Panc1 (cell line): ENCODE measurements at regions of chr3 and their contacts with region 1.

Region 1: DNA sequence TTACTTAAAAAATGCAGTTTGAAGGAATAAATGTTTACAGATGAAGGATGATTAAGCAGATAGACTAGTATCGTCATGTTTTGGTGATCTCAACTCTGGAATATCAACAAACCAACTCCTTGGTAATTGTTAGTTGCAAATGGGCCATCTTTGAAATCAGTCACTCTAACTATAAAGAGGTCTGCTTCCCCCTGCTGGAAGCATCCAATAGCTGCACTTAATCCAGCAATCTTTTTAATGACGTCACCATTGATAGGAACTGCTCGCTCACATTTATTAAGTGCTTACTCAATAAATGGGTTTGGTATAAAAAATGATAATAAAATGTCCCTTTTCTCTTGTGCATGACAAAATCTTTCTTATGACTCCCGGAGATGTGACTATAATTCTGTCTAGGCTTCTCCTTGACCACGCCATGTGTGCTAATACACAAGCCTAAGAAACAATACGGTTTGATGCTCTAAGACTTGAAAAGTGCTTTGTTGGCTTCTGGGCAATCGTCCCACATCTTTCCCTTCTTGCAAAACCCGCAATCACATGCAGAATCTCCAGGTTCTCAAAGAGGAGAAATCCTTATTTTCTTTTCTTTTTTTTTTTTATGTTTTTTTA is 227.6 kb upstream of the POU1F1 start:
- DNase-seq: peak; percentile 41
- ATAC-seq: no peak
- H3K4me3 ChIP-seq: no peak overlapping the region
- H3K27ac ChIP-seq: peak overlapping the region; percentile 34; the same call in 1 of the 2 replicates
- H3K4me1 ChIP-seq: no peaks in the 10 kb centered on the region
- H3K27me3 ChIP-seq: no peaks in the 10 kb centered on the region
- CTCF ChIP-seq: peak; percentile 56; the same call in 1 of the 2 replicates

Region 2: DNA sequence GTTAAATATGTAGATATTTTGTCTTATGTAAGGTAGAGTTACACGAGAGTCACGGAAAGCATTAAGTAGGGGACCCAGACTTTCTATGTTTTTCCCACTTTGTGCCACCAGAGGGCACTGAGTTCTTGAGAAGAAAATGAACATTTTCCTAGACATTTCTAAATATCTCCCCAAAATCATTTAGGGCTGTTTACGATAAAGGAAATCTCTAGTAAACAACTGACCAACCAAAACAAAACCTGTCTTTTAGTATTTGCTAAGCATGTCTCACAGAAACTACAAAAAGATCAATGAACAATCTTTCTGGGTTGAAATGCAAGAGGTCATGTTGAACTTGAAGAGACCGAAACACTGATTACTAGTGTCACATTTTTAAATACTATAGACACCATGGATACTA is 243.7 kb before region 1 on chr3:
- CTCF ChIA-PET with region 1: no interaction called
- POLR2A ChIA-PET with region 1: no interaction called
- in situ Hi-C with region 1: no loop called
- intact Hi-C with region 1: loop called (anchors 2 kb)
- DNase-seq: peak; percentile 27
- ATAC-seq: no peak
- H3K4me3 ChIP-seq: no peak overlapping the region
- H3K27ac ChIP-seq: no peak overlapping the region; the same call in 1 of the 2 replicates
- H3K4me1 ChIP-seq: no peaks in the 10 kb centered on the region
- H3K27me3 ChIP-seq: no peaks in the 10 kb centered on the region
- CTCF ChIP-seq: peak; percentile 66; the same call in 1 of the 2 replicates

Region 3: DNA sequence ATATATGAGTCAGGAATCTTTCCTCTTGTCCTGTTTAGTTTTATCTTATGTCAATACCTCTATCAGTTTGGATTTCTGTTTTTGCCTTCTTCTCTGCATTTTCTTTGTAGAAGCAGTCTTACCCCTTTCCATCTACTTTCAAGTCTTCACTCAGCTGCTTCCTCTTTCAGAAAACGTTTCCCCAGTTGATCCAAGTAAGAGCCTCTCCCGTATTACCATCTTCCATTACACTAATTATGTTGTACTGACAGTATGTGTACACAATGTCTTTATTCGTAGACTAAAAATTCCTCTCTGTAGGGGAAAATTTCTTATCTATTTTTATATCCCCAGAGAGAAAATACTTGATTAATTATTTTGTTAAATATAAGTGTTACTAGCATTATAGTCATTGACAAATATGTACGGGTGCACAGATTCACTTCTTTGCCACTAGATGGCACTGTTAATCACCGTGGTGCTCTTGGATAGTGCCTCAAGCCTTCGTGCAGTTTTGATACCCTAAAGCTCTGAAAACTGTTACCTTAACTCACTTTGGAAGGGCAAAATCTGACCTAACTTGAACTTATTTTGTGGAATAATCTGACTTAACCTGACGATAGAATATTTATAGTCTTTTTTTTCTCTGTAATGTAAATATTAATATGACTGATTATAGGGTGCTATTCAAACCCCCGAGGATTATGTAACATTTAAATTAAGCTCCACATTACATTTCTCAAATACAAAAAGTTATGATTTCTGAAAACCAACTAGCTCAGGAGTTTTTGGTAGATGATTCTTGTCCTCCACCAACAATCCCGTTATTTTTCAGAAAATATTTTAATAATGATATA is 153.4 kb before region 1 on chr3:
- CTCF ChIA-PET with region 1: no interaction called
- POLR2A ChIA-PET with region 1: no interaction called
- in situ Hi-C with region 1: no loop called
- intact Hi-C with region 1: loop called (anchors 5 kb)
- DNase-seq: peak; percentile 33
- ATAC-seq: peak; percentile 91
- H3K4me3 ChIP-seq: no peak overlapping the region
- H3K27ac ChIP-seq: peak overlapping the region; percentile 77
- H3K4me1 ChIP-seq: peaks cover 2% of the 10 kb centered on the region; the same call in 1 of the 2 replicates
- H3K27me3 ChIP-seq: no peaks in the 10 kb centered on the region
- CTCF ChIP-seq: peak; percentile 75; the same call in 1 of the 2 replicates